PC-3 (cell line): ENCODE measurements at regions of chr6 and their contacts with region 1.

Region 1: DNA sequence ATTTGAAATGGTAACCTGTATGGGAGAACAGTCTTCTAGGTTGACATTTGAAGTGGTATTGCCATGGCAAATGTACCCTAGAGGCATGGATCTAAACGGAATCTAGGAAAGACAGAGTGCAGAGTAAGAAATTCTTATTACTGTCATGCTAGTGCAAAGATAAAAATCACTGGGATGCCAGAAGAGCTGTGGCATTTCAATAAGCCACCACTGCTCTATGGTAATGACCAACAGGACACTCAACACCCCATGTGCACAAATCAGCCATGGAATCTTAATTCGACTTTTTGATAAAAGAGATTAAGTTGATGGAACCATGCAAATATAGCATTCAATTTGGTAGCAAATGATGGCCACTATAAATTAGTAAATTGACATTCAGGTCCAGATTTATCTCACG is 74.1 kb downstream of the ID4 start:
- DNase-seq: no peak
- ATAC-seq: no peak
- H3K4me3 ChIP-seq: no peak overlapping the region
- H3K27ac ChIP-seq: no peak overlapping the region
- H3K4me1 ChIP-seq: no peaks in the 10 kb centered on the region
- H3K27me3 ChIP-seq: peaks cover 11% of the 10 kb centered on the region
- CTCF ChIP-seq: no peak

Region 2: DNA sequence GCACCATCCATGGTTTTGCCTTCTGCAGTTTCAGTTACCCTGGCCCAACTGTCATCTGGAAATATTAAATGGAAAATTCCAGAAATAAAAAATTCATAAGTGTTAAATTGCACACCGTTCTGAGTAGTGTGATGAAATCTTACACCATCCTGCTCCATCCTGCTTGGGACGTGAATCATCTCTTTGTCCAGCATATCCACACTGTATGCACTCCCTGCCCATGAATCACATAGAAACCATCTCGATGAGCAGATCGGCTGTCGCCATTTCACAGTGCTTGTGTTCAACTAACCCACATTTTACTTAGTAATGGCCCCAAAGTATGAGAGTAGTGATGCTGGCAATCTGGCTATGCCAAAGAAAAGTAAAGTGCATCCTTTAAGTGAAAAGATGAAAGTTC is 179.9 kb before region 1 on chr6:
- CTCF ChIA-PET with region 1: interaction called, 11 read pairs
- POLR2A ChIA-PET with region 1: no interaction called
- intact Hi-C with region 1: no loop called
- DNase-seq: peak; percentile 87
- ATAC-seq: peak; percentile 100
- H3K4me3 ChIP-seq: no peak overlapping the region
- H3K27ac ChIP-seq: peak overlapping the region; percentile 62
- H3K4me1 ChIP-seq: peaks cover 9% of the 10 kb centered on the region
- H3K27me3 ChIP-seq: no peaks in the 10 kb centered on the region
- CTCF ChIP-seq: no peak

Region 3: DNA sequence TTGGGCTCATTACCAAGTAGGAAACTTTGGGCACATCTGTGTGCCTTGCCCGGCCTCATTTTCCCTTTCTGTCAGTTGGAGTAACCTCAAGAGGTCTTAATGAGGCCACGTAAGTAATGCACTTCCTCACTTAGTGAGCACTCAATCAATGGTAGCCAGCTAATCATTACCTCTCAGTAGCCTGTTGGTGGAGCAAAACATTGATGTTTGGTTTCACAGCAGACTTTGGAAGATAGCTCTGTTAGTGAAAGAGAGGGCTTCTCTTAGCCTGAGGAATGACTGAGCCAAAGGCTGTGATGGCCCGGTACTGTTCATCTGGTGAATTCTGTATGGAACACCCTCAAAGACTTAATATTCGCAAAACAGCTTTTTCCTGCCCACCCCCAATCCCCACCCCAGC is 130.0 kb before region 1 on chr6:
- CTCF ChIA-PET with region 1: no interaction called
- POLR2A ChIA-PET with region 1: no interaction called
- intact Hi-C with region 1: no loop called
- DNase-seq: no peak
- ATAC-seq: no peak
- H3K4me3 ChIP-seq: no peak overlapping the region
- H3K27ac ChIP-seq: no peak overlapping the region
- H3K4me1 ChIP-seq: no peaks in the 10 kb centered on the region
- H3K27me3 ChIP-seq: no peaks in the 10 kb centered on the region
- CTCF ChIP-seq: no peak

Region 4: GRCh38 chr6:19879663-19880062 is 31.6 kb before region 1 on chr6:
- CTCF ChIA-PET with region 1: no interaction called
- POLR2A ChIA-PET with region 1: no interaction called
- intact Hi-C with region 1: no loop called
- DNase-seq: peak; percentile 37
- ATAC-seq: no peak
- H3K4me3 ChIP-seq: no peak overlapping the region
- H3K27ac ChIP-seq: no peak overlapping the region
- H3K4me1 ChIP-seq: 0 out of 2 replicates have a peak, but pooled peaks cover 8% of the 10 kb centered on the region
- H3K27me3 ChIP-seq: 0 out of 2 replicates have a peak, but pooled peaks cover 10% of the 10 kb centered on the region
- CTCF ChIP-seq: no peak